Heart left ventricle (tissue), 16 donors: ENCODE measurements at regions of chr14 and their contacts with region 1.

Region 1: DNA sequence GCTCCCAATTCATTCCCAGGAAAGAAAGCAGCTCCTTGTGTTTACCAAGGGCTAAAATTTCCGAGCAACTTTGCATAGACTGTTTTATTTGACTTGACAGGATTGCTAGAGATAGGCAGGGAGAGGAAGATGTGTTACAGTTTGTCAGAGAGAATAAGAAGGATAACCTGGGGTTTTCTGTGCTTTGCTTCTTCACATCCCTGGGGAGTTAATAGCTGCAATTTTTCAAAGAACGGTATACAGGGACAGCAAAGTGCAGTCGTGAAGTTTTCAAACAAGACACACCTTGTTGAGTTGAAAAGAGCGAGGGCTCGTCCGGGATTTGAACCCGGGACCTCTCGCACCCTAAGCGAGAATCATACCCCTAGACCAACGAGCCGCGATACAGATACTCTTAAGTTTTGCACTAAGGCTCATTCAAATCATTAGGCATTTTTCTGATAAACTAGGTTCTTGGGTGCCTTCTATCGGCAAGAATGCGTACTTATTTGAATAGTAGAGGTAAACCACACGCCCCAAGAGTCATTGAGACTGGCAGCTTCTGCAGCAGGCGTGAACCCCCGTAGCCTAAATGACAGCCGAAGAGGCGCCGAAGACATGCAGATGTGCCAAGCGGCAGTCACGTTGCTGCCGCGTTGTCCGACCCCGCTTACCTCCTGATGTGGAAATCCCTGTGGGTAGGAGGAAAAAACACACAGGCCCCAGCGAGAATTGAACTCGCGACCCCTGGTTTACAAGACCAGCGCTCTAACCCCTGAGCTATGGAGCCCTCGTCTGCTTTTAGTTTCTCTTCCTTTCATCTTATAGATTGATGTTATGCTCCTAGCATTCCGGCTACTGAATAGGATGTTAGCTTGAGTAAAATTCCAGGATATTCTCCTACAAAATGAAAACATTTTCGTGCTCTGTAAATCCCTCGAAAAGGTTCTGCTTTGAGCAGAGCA is 22.2 kb upstream of the RNASE12 start:
- DNase-seq: peak; percentile 67 to 84 (median 81)
- ATAC-seq: peak; percentile 79 to 89 (median 85)
- H3K4me3 ChIP-seq: peak overlapping the region; percentile 15 to 74 (median 58)
- H3K27ac ChIP-seq: peak overlapping the region in 10 of 12 donors; percentile 21 to 82 (median 59)
- H3K4me1 ChIP-seq: peaks cover 0 to 60% (median 7%) of the 10 kb centered on the region in 12 donors
- H3K27me3 ChIP-seq: peaks cover 0 to 3% (median 0%) of the 10 kb centered on the region in 9 donors
- CTCF ChIP-seq: peak; percentile 38 to 86 (median 74)
- POLR2A ChIP-seq: no peak

Region 2: DNA sequence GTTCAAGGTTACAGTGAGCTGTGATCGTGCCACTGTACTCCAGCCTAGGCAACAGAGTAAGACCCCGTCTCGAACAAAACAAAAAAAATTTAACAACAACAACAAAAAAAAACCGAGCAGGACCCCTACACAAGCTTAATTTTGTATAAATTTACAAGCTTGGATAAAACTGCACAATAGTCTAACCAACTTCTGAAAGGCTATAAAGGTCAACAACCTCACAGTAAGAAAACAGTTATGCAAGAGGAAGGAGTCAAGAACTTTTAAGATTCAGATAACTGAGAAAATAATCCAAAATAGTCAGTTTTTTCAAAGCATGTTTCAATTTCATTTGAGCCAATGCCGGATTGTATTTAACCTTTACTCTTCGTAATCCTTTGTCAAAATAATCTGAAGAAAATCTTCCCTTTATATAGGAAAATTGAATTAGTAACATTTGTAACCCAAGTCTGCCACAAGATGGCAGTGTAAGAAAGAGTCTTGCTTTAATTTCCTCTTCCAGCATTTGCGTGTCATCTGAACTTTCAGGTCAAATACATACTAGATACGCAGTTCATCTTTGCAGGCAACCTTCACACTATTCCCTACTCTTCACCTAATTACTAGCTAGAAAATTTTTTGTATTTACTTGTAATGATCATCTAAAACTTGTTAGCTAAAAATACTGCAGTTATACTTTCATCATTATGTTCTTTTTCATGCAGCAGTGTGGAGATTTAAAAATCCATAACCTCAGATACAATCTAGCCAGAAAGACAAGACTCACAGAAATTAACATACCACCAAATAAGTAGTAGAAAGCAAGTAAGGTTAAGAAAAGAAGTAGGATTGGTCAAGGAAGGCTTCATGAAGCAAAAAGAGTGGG is 286.1 kb before region 1 on chr14:
- intact Hi-C with region 1: loop called (anchors 1 to 5 kb)
- DNase-seq: peak in 1 of 5 donors; percentile 33
- ATAC-seq: peak in 2 of 4 donors; percentile 48 to 58
- H3K4me3 ChIP-seq: no peak overlapping the region
- H3K27ac ChIP-seq: peak overlapping the region in 3 of 12 donors; percentile 6 to 51 (median 40)
- H3K4me1 ChIP-seq: peaks cover 0 to 29% (median 13%) of the 10 kb centered on the region in 12 donors
- H3K27me3 ChIP-seq: no peaks in the 10 kb centered on the region
- CTCF ChIP-seq: peak; percentile 67 to 88 (median 80)
- POLR2A ChIP-seq: no peak

Region 3: GRCh38 chr14:20343092-20343861 is 270.1 kb before region 1 on chr14 and contains the start of gene PARP2:
- intact Hi-C with region 1: loop called in 3 of 10 experiments (anchors 5 kb)
- DNase-seq: peak; percentile 97 to 99 (median 98)
- ATAC-seq: peak; percentile 98 to 99 (median 98)
- H3K4me3 ChIP-seq: peak within 1 kb of the TSS; percentile 52 to 88 (median 70)
- H3K27ac ChIP-seq: peak within 1 kb of the TSS; percentile 73 to 98 (median 85)
- H3K4me1 ChIP-seq: peaks cover 0 to 13% (median 6%) of the 10 kb centered on the region in 12 donors
- H3K27me3 ChIP-seq: no peaks in the 10 kb centered on the region
- CTCF ChIP-seq: peak in 1 of 12 donors; percentile 11
- POLR2A ChIP-seq: peak in 1 of 2 donors; percentile 85
- total RNA-seq, gene PARP2: 6.8 to 20.0 (median 16.2) TPM

Region 4: GRCh38 chr14:20454516-20455354 is 158.6 kb before region 1 on chr14 and contains the starts of genes APEX1 and OSGEP:
- intact Hi-C with region 1: loop called in 6 of 10 experiments (anchors 5 to 10 kb)
- DNase-seq: peak; percentile 98 to 99 (median 99)
- ATAC-seq: peak; percentile 95 to 97 (median 96)
- H3K4me3 ChIP-seq: peak within 1 kb of the TSS; percentile 71 to 92 (median 81)
- H3K27ac ChIP-seq: peak within 1 kb of the TSS; percentile 88 to 98 (median 93)
- H3K4me1 ChIP-seq: peaks cover 0 to 53% (median 26%) of the 10 kb centered on the region in 12 donors
- H3K27me3 ChIP-seq: no peaks in the 10 kb centered on the region
- CTCF ChIP-seq: peak in 1 of 12 donors; percentile 6
- POLR2A ChIP-seq: peak in 1 of 2 donors; percentile 89
- total RNA-seq, gene APEX1: 60.4 to 92.6 (median 76.4) TPM
- total RNA-seq, gene OSGEP: 16.1 to 40.9 (median 18.5) TPM

Region 5: GRCh38 chr14:20530771-20531571 is 82.4 kb before region 1 on chr14:
- intact Hi-C with region 1: loop called in 5 of 10 experiments (anchors 2 to 5 kb)
- DNase-seq: peak; percentile 35 to 78 (median 49)
- ATAC-seq: no peak
- H3K4me3 ChIP-seq: no peak overlapping the region
- H3K27ac ChIP-seq: no peak overlapping the region
- H3K4me1 ChIP-seq: no peaks in the 10 kb centered on the region
- H3K27me3 ChIP-seq: peaks cover 0 to 5% (median 0%) of the 10 kb centered on the region in 9 donors
- CTCF ChIP-seq: peak; percentile 45 to 75 (median 58)
- POLR2A ChIP-seq: no peak

Region 6: DNA sequence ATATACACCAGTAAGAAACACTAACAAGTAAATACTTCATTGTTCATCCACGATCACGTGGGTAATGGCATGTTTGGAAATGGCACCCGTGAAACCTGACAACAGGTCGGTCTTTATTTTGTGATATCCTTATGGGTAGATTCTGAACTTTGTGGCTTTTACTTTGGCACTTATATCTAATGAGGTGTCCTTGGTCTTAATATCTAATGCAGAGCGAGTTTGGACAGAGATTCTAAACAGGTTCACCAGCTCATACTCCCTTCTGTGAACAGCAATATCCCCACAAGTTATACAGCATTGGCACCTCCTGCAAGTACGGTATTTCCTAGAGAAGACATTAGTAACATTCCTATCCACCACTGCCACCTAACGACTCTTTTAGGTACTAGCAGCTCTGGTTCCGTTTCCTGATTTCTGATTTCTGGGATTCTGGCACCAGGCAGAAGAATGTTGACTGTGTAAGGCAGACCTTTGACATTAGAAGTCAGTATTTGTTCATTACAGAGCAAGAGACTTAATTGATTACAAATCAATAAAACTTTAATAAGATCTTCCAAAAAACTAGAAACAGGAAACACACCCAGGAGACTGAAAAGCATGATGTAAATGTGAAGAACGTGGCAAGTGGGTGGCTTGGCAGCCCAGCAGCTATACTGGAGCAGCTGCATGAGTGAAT is 77.6 kb after region 1 on chr14:
- intact Hi-C with region 1: loop called in 3 of 10 experiments (anchors 1 to 5 kb)
- DNase-seq: peak in 3 of 5 donors; percentile 28 to 42 (median 30)
- ATAC-seq: peak; percentile 64 to 89 (median 87)
- H3K4me3 ChIP-seq: no peak overlapping the region
- H3K27ac ChIP-seq: no peak overlapping the region
- H3K4me1 ChIP-seq: peaks cover 0 to 19% (median 4%) of the 10 kb centered on the region in 12 donors
- H3K27me3 ChIP-seq: no peaks in the 10 kb centered on the region
- CTCF ChIP-seq: peak; percentile 76 to 90 (median 85)
- POLR2A ChIP-seq: no peak

Region 7: DNA sequence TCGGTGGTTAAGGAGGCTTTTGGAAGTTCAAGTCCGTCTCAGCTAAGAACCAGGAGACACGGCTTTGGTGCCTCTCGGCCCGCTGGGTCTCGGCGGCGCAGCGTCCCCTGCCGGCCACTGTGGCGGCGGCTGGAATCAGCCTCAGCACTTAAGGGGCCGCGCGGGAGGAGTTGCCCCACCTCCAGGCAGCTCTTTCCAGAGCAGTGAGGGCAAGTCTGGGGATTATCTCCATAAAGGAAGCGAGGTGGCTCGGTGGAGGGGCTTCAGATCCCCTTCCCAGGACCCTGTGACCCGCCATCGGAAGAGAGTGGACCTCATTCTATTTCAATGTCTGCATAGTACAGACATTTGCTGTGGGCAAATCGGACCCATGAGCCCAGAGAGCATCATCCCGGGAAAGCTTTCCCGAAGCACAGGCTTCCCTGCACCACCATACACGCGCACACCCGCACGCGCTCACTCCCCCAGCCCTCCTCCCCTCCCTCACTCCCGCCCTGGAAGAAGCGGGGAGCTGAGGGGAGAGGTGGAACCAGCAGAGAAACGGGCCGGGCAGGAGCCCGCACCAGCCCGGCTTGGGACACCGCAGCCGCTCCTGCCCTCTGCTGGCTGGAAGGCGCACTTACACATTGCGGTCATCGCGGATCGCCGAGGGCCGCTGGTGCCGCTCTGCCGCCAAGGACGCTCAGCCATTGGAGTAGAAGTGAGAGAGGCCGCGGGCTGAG is 357.8 kb after region 1 on chr14:
- intact Hi-C with region 1: loop called in 1 of 10 experiments (anchors 10 kb)
- DNase-seq: peak; percentile 85 to 93 (median 86)
- ATAC-seq: peak; percentile 92 to 97 (median 96)
- H3K4me3 ChIP-seq: peak overlapping the region; percentile 43 to 73 (median 64)
- H3K27ac ChIP-seq: peak overlapping the region in 11 of 12 donors; percentile 14 to 83 (median 58)
- H3K4me1 ChIP-seq: peaks cover 0 to 13% (median 5%) of the 10 kb centered on the region in 12 donors
- H3K27me3 ChIP-seq: no peaks in the 10 kb centered on the region
- CTCF ChIP-seq: peak; percentile 68 to 90 (median 76)
- POLR2A ChIP-seq: no peak